ENCODE measurements at regions of chr13 and their contacts with region 1.

Region 1: DNA sequence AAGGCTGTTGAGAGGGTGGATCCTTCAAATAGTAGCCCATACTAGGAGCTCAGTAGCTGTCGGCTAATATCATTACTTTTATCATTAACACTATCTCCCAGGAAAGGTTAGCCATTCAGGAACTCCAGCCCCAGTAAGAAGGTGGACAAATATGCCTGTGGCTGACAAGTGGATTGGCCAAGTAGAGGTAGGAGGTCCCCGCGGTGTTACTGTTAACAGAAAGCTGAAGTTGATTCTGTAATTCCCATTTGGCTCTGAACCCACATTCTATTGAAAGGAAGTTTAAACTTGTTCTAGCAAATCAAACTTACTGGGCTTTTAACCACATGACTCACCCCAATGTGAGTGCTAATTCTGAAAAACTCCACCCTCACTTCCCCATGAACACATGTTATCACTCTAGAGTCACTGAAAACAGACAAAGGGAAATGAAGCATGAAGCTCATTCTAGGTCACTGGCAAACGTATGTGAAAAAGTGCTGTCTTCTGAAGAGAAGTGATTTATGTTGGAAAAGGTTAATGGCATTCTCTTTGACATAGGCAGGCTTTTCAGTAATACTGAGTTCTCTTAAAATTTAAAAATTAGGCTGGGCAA is 273.5 kb downstream of the FGF14 start:
- DNase-seq: no peak
- ATAC-seq: no peak
- H3K4me3 ChIP-seq: no peak overlapping the region
- H3K27ac ChIP-seq: no peak overlapping the region
- H3K4me1 ChIP-seq: no peaks in the 10 kb centered on the region
- H3K27me3 ChIP-seq: peaks cover 54% of the 10 kb centered on the region
- CTCF ChIP-seq: no peak

Region 2: GRCh38 chr13:102097708-102098107 is 30.6 kb before region 1 on chr13:
- CTCF ChIA-PET with region 1: no interaction called
- POLR2A ChIA-PET with region 1: interaction called, 10 read pairs
- intact Hi-C with region 1: no loop called
- DNase-seq: no peak
- ATAC-seq: no peak
- H3K4me3 ChIP-seq: no peak overlapping the region
- H3K27ac ChIP-seq: no peak overlapping the region
- H3K4me1 ChIP-seq: no peaks in the 10 kb centered on the region
- H3K27me3 ChIP-seq: 0 out of 2 replicates have a peak, but pooled peaks cover under 1% of the 10 kb centered on the region
- CTCF ChIP-seq: no peak